ENCODE measurements at regions of chr20 and their contacts with region 1.

Region 1: DNA sequence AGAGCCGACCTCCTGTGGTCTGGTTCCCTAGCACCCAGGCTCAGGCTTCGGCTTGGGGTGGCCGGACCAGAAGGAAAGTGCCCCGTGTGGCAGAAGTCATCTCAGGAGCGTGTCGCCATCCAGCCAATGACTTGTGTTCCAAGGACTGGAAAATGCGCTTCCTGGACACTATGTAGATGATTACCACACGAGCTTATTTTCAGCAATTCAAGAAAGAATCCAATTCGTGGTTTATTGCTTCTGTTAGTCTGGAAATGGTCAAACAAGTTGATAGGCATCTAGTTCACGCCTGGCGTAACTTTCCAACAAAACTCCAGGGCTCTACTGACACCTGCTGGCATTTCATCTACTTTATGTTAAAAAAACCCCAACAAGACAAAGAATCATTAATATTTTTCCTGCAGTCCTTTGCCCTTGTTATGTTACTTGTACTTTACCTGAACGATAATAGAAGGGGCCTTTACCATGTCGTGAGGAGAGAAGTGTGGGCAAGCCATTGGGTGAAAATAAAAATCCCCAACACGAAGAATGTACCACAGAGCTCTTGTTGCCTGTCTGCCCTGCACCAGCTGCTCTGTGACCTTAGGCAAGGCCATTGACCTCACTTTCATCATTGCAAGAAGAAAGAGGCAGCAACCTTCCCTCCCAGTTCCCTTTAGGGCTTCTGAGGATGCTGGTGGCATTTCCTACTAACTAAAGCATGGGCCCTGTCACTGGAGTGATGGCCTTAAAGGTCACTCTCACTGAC is 154.7 kb upstream of the LAMP5 start:
- DNase-seq: no peak
- ATAC-seq: peak; percentile 58
- H3K4me3 ChIP-seq: no peak overlapping the region
- H3K27ac ChIP-seq: no peak overlapping the region
- H3K4me1 ChIP-seq: no peaks in the 10 kb centered on the region
- H3K27me3 ChIP-seq: no peaks in the 10 kb centered on the region
- CTCF ChIP-seq: peak; percentile 51

Region 2: DNA sequence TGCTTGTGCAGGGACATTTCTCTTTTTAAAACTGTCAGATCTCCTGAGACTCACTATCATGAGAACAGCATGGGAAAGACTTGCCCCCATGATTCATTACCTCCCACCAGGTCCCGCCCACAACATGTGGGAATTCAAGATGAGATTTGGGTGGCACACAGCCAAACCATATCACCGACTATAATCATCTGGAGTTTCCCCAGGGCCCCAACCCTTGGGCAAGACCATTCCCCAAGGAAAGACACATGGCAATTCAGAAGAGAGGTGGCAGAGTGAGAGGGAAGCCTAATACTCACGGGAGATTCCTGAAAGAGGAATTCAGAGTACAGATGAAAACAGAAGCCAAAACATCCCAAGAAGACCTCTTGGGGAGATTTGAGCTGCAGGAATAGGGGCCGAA is 581.8 kb before region 1 on chr20:
- intact Hi-C with region 1: loop called (anchors 10 kb)
- DNase-seq: no peak
- ATAC-seq: no peak
- H3K4me3 ChIP-seq: no peak overlapping the region
- H3K27ac ChIP-seq: no peak overlapping the region
- H3K4me1 ChIP-seq: no peaks in the 10 kb centered on the region
- H3K27me3 ChIP-seq: no peaks in the 10 kb centered on the region
- CTCF ChIP-seq: no peak

Region 3: GRCh38 chr20:8853805-8854338 is 505.9 kb before region 1 on chr20:
- intact Hi-C with region 1: loop called (anchors 10 kb)
- DNase-seq: no peak
- ATAC-seq: peak; percentile 89
- H3K4me3 ChIP-seq: peak overlapping the region; percentile 6
- H3K27ac ChIP-seq: peak overlapping the region; percentile 38
- H3K4me1 ChIP-seq: peaks cover 13% of the 10 kb centered on the region
- H3K27me3 ChIP-seq: no peaks in the 10 kb centered on the region
- CTCF ChIP-seq: peak; percentile 90